ENCODE measurements at regions of chr1 and their contacts with region 1.

Region 1: DNA sequence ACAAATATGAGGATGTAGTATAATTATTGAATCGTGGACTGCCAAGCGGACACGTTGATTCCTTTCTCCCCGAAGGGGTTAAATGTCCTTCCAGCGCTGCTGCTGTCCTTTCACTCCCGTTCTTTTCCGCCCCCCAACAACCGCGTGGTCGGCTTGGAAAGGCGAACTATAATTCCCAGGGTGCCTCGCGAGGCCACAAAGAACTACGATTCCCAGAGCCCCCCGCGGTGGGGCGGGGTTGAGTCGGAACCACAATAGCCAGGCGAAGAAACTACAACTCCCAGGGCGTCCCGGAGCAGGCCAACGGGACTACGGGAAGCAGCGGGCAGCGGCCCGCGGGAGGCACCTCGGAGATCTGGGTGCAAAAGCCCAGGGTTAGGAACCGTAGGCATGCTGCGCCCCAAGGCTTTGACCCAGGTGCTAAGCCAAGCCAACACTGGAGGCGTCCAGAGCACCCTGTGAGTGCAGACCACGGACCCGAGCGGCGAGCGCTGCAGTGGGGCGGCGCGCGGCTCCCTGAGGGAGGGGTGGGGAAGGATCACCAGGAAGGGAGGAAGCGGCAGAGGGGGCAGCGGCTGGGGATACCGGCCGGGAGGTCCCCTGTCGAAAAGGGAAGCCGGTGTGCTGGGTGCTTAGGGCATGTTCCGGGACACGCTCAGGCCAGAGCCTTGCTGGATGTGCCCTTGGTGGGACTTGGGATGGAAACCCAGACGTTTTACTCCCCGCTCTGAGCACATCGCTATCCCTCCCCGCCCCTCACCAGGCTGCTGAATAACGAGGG is at the start of gene LAMTOR2:
- DNase-seq: peak; percentile 98
- H3K4me3 Mint-ChIP-seq: peak within 1 kb of the TSS; percentile 93
- H3K27ac Mint-ChIP-seq: peak within 1 kb of the TSS; percentile 96
- H3K4me1 Mint-ChIP-seq: peaks cover 27% of the 10 kb centered on the region
- H3K27me3 Mint-ChIP-seq: no peaks in the 10 kb centered on the region
- total RNA-seq, gene LAMTOR2: 61.4 to 65.1 TPM

Region 2: DNA sequence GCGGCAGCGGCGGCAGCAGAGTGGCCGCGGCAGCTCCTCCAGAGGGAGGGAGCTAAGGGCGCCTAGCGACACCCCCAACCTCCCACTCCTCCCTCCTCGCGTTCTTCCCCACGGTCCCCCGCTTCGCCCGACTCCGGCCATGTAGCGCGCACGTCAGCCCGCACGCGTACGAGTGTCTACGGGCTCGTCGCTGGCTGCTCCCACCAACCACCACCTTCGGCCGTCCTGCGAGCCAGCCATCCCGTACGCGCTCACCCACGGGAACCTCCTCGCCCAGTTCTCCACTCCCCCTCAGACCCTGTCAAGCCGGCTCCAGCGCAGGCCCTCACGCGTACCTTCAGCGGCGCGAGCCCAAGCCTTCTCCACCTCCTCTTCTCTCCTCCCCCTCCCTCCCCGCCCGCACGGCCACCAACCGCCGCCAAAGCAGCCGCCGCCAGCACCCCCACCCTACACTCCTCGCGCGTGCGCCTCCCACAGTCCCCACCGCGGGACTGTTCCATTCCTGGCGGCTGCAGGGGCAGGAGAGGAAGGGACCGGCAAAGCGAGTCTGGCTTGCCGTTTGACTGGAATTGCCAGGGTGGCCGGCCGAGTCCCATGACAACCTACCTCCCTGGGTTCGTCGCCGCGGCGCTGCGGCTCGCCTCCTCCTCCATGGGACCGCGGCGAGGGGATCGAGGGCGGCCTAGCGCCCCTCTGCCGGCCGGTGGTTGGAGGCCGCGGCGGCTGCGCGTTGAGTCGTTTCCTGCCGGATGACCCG is 366.2 kb before region 1 on chr1 and contains the start of gene YY1AP1:
- CTCF ChIA-PET with region 1: no interaction called
- POLR2A ChIA-PET with region 1: no interaction called
- intact Hi-C with region 1: no loop called
- DNase-seq: peak; percentile 93
- H3K4me3 Mint-ChIP-seq: peak within 1 kb of the TSS; percentile 97
- H3K27ac Mint-ChIP-seq: peak within 1 kb of the TSS; percentile 94
- H3K4me1 Mint-ChIP-seq: peaks cover 60% of the 10 kb centered on the region
- H3K27me3 Mint-ChIP-seq: no peaks in the 10 kb centered on the region
- total RNA-seq, gene YY1AP1: 56.2 to 62.1 TPM

Region 3: GRCh38 chr1:155744711-155745283 is 309.9 kb before region 1 on chr1:
- CTCF ChIA-PET with region 1: no interaction called
- POLR2A ChIA-PET with region 1: no interaction called
- intact Hi-C with region 1: loop called (anchors 10 kb)
- DNase-seq: no peak
- H3K4me3 Mint-ChIP-seq: peak overlapping the region; percentile 90
- H3K27ac Mint-ChIP-seq: peak overlapping the region; percentile 83
- H3K4me1 Mint-ChIP-seq: peaks cover 3% of the 10 kb centered on the region
- H3K27me3 Mint-ChIP-seq: no peaks in the 10 kb centered on the region

Region 4: GRCh38 chr1:155911156-155912055 is 143.3 kb before region 1 on chr1 and contains the start of gene RIT1:
- CTCF ChIA-PET with region 1: no interaction called
- POLR2A ChIA-PET with region 1: no interaction called
- intact Hi-C with region 1: loop called (anchors 2 kb)
- DNase-seq: peak; percentile 90
- H3K4me3 Mint-ChIP-seq: peak within 1 kb of the TSS; percentile 97
- H3K27ac Mint-ChIP-seq: peak within 1 kb of the TSS; percentile 96
- H3K4me1 Mint-ChIP-seq: peaks cover 22% of the 10 kb centered on the region
- H3K27me3 Mint-ChIP-seq: no peaks in the 10 kb centered on the region
- total RNA-seq, gene RIT1: 19.1 to 21.1 TPM

Region 5: DNA sequence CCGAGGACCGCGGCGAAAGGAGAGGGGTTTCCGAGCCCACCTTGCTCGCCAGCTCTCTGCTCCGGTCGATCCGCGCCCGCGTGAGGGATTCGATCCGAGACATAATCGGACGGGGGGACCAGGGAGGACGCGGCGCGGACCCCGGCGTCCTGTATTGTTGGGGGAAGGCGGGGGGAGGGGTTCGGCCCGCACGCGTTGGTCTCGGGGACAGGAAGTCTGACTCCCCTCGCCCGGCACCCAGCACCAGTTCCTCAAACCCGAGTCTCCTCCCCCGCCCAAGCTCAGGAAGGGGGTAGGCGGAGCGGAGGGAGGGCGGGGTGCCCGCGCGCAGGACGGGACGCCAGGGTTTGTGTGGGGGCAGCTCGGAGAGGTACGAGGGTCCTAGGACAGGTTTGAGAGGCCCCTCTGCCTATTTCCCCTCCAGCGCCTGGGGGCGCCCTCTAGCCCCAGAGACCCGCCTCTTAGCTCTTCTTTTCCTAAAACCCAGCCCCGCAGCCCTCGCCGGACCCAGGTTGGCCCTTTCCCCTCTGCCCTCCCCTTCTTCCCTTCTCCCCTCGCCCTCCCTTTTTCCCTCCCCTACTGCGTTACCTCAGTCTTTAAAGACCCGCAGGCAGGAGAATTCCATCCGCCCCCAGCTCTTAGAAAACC is 76.2 kb before region 1 on chr1 and contains the start of gene ARHGEF2:
- CTCF ChIA-PET with region 1: no interaction called
- POLR2A ChIA-PET with region 1: no interaction called
- intact Hi-C with region 1: loop called (anchors 1 kb)
- DNase-seq: peak; percentile 88
- H3K4me3 Mint-ChIP-seq: peak within 1 kb of the TSS; percentile 96
- H3K27ac Mint-ChIP-seq: peak within 1 kb of the TSS; percentile 96
- H3K4me1 Mint-ChIP-seq: peaks cover 66% of the 10 kb centered on the region
- H3K27me3 Mint-ChIP-seq: no peaks in the 10 kb centered on the region
- total RNA-seq, gene ARHGEF2: 165 to 174 TPM

Region 6: GRCh38 chr1:156020292-156021089 is 34.2 kb before region 1 on chr1 and contains the start of gene SSR2:
- CTCF ChIA-PET with region 1: interaction called, 11 read pairs
- POLR2A ChIA-PET with region 1: interaction called, 4 read pairs
- intact Hi-C with region 1: loop called (anchors 1 kb)
- DNase-seq: peak; percentile 92
- H3K4me3 Mint-ChIP-seq: peak within 1 kb of the TSS; percentile 98
- H3K27ac Mint-ChIP-seq: peak within 1 kb of the TSS; percentile 91
- H3K4me1 Mint-ChIP-seq: peaks cover 21% of the 10 kb centered on the region
- H3K27me3 Mint-ChIP-seq: no peaks in the 10 kb centered on the region
- total RNA-seq, gene SSR2: 171 to 175 TPM

Measured in activated CD4-positive, alpha-beta memory T cell treated with anti-CD3 and anti-CD28 coated beads for 36 hours (primary cell).